ENCODE measurements at regions of chr4 and their contacts with region 1.

Region 1: GRCh38 chr4:143362265-143363046 is 25.8 kb downstream of the GAB1 start:
- DNase-seq: no peak
- ATAC-seq: no peak
- H3K4me3 ChIP-seq: no peak overlapping the region
- H3K4me3 Mint-ChIP-seq: no peak overlapping the region
- H3K27ac ChIP-seq: no peak overlapping the region
- H3K27ac Mint-ChIP-seq: no peak overlapping the region
- H3K4me1 ChIP-seq: peaks cover 11% of the 10 kb centered on the region
- H3K4me1 Mint-ChIP-seq: peaks cover 15% of the 10 kb centered on the region
- H3K27me3 ChIP-seq: no peaks in the 10 kb centered on the region
- H3K27me3 Mint-ChIP-seq: no peaks in the 10 kb centered on the region
- CTCF ChIP-seq: no peak

Region 2: DNA sequence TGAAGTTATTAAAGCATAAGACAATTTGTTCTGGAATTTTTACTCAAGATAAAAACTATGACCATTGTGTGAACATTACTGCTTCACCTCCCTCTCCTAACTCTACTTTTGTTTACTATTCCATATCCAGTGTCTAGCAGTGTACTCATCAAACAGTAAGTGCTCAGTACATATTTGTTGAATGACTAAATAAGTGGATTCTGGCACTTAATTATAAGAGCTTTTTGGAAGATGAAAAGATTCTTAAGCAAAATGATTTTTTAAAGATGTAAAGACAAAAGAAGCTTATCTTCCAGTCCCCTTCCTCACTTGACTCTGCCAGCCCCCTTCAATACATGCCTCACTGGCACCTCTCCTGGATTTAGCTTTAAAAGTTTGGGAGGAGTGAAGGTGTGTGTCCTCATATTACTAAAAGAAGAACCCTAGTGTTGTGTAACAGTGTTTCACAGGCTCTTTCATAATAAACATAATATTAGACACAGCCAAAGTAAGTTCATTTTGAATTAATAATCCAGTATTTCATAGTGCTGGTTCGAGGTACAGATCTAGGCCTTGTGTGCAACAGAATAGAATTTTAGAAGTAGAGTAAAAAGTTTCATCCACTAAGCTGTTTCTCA is 27.2 kb after region 1 on chr4:
- CTCF ChIA-PET with region 1: no interaction called
- POLR2A ChIA-PET with region 1: no interaction called
- intact Hi-C with region 1: no loop called
- DNase-seq: no peak
- ATAC-seq: no peak
- H3K4me3 ChIP-seq: no peak overlapping the region
- H3K4me3 Mint-ChIP-seq: no peak overlapping the region
- H3K27ac ChIP-seq: no peak overlapping the region
- H3K27ac Mint-ChIP-seq: no peak overlapping the region
- H3K4me1 ChIP-seq: no peaks in the 10 kb centered on the region
- H3K4me1 Mint-ChIP-seq: no peaks in the 10 kb centered on the region
- H3K27me3 ChIP-seq: no peaks in the 10 kb centered on the region
- H3K27me3 Mint-ChIP-seq: peaks cover 5% of the 10 kb centered on the region
- CTCF ChIP-seq: no peak

Region 3: GRCh38 chr4:143441678-143442077 is 79.2 kb after region 1 on chr4:
- CTCF ChIA-PET with region 1: no interaction called
- POLR2A ChIA-PET with region 1: no interaction called
- intact Hi-C with region 1: loop called in 1 of 2 experiments (anchors 2 kb)
- DNase-seq: no peak
- ATAC-seq: no peak
- H3K4me3 ChIP-seq: no peak overlapping the region
- H3K4me3 Mint-ChIP-seq: no peak overlapping the region
- H3K27ac ChIP-seq: no peak overlapping the region
- H3K27ac Mint-ChIP-seq: no peak overlapping the region
- H3K4me1 ChIP-seq: no peaks in the 10 kb centered on the region
- H3K4me1 Mint-ChIP-seq: no peaks in the 10 kb centered on the region
- H3K27me3 ChIP-seq: no peaks in the 10 kb centered on the region
- H3K27me3 Mint-ChIP-seq: peaks cover 6% of the 10 kb centered on the region
- CTCF ChIP-seq: no peak